ENCODE measurements at regions of chr19 and their contacts with region 1.

Region 1: GRCh38 chr19:52248241-52248640 is 21.1 kb upstream of the ZNF766 start:
- DNase-seq: no peak
- ATAC-seq: peak; percentile 71
- H3K4me3 Mint-ChIP-seq: no peak overlapping the region
- H3K27ac Mint-ChIP-seq: no peak overlapping the region
- H3K4me1 Mint-ChIP-seq: no peaks in the 10 kb centered on the region
- H3K27me3 Mint-ChIP-seq: no peaks in the 10 kb centered on the region
- CTCF ChIP-seq: no peak

Region 2: GRCh38 chr19:51576850-51577249 is 671.4 kb before region 1 on chr19:
- CTCF ChIA-PET with region 1: no interaction called
- POLR2A ChIA-PET with region 1: no interaction called
- intact Hi-C with region 1: no loop called
- DNase-seq: no peak
- ATAC-seq: no peak
- H3K4me3 Mint-ChIP-seq: no peak overlapping the region
- H3K27ac Mint-ChIP-seq: no peak overlapping the region
- H3K4me1 Mint-ChIP-seq: peaks cover 29% of the 10 kb centered on the region
- H3K27me3 Mint-ChIP-seq: no peaks in the 10 kb centered on the region
- CTCF ChIP-seq: no peak

Region 3: GRCh38 chr19:51971624-51972023 is 276.6 kb before region 1 on chr19:
- CTCF ChIA-PET with region 1: no interaction called
- POLR2A ChIA-PET with region 1: no interaction called
- intact Hi-C with region 1: no loop called
- DNase-seq: no peak
- ATAC-seq: no peak
- H3K4me3 Mint-ChIP-seq: no peak overlapping the region
- H3K27ac Mint-ChIP-seq: no peak overlapping the region
- H3K4me1 Mint-ChIP-seq: no peaks in the 10 kb centered on the region
- H3K27me3 Mint-ChIP-seq: no peaks in the 10 kb centered on the region
- CTCF ChIP-seq: no peak

Region 4: DNA sequence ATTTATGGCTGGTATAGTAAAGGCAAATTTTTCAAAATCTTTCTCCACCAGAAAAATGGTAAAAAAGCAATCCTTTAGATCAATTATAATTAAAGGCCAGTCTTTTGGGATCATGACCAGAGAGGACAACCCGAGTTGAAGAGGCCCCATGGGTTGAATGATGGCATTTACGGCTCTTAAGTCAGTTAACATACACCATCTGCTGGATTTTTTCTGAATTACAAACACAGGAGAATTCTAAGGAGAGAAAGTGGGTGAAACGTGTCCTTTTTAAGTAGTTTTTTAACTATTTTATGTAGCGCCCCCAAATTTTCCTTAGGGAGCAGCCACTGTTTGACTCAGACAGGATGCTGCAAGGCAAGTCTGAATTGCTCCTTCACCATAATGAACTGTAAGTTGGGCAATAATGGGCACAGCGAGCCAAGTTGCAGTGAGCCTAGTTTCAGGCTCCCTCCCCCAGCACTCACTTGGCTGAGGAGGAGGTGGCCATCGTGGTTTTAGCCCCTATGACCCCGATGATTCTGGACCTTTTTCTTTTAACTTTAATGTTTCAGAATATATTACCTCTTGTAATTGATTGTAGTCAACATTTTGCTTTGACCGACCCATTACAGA is 500.2 kb after region 1 on chr19:
- CTCF ChIA-PET with region 1: interaction called, 12 read pairs
- POLR2A ChIA-PET with region 1: no interaction called
- intact Hi-C with region 1: no loop called
- DNase-seq: no peak
- ATAC-seq: peak; percentile 50
- H3K4me3 Mint-ChIP-seq: no peak overlapping the region
- H3K27ac Mint-ChIP-seq: no peak overlapping the region
- H3K4me1 Mint-ChIP-seq: no peaks in the 10 kb centered on the region
- H3K27me3 Mint-ChIP-seq: no peaks in the 10 kb centered on the region
- CTCF ChIP-seq: no peak